Psoas muscle (tissue), 8 donors: ENCODE measurements at regions of chr15 and their contacts with region 1.

Region 1: GRCh38 chr15:55221090-55222011 is 24.6 kb upstream of the RSL24D1 start:
- DNase-seq: no peak
- ATAC-seq: peak in 2 of 4 donors; percentile 42 to 48
- H3K4me3 ChIP-seq: no peak overlapping the region
- H3K27ac ChIP-seq: no peak overlapping the region
- H3K4me1 ChIP-seq: no peaks in the 10 kb centered on the region
- H3K27me3 ChIP-seq: no peaks in the 10 kb centered on the region
- CTCF ChIP-seq: no peak

Region 2: DNA sequence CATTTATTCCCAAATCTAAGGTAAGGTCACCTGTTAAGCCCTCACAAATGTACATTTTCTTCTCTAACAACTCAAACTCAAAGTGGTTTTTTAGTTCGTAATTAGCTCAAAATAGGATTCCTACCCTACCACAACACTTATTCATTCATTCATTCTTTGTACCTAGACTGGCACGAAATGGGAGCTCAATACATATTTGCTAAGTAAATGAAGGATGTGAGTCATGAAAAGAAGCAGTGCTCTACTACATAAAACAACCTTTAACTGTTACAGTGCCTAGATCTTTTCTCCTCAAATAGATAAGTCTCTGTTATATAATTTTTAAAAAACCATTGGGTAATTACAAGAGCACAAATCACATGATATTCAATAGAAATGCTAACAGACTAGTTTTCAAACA is 37.7 kb before region 1 on chr15:
- intact Hi-C with region 1: no loop called
- DNase-seq: no peak
- ATAC-seq: no peak
- H3K4me3 ChIP-seq: no peak overlapping the region
- H3K27ac ChIP-seq: no peak overlapping the region
- H3K4me1 ChIP-seq: no peaks in the 10 kb centered on the region
- H3K27me3 ChIP-seq: no peaks in the 10 kb centered on the region
- CTCF ChIP-seq: no peak

Region 3: GRCh38 chr15:55270291-55270690 is 48.9 kb after region 1 on chr15:
- intact Hi-C with region 1: loop called in 1 of 2 experiments (anchors 5 kb)
- DNase-seq: no peak
- ATAC-seq: no peak
- H3K4me3 ChIP-seq: no peak overlapping the region
- H3K27ac ChIP-seq: no peak overlapping the region
- H3K4me1 ChIP-seq: no peaks in the 10 kb centered on the region
- H3K27me3 ChIP-seq: no peaks in the 10 kb centered on the region
- CTCF ChIP-seq: no peak

Region 4: GRCh38 chr15:55279746-55280351 is 58.5 kb after region 1 on chr15:
- intact Hi-C with region 1: loop called in 1 of 2 experiments (anchors 5 kb)
- DNase-seq: no peak
- ATAC-seq: no peak
- H3K4me3 ChIP-seq: no peak overlapping the region
- H3K27ac ChIP-seq: no peak overlapping the region
- H3K4me1 ChIP-seq: no peaks in the 10 kb centered on the region
- H3K27me3 ChIP-seq: no peaks in the 10 kb centered on the region
- CTCF ChIP-seq: no peak

Region 5: GRCh38 chr15:55290528-55291057 is 69.2 kb after region 1 on chr15:
- intact Hi-C with region 1: loop called (anchors 1 to 5 kb)
- DNase-seq: peak; percentile 82 to 90
- ATAC-seq: peak; percentile 88 to 98 (median 91)
- H3K4me3 ChIP-seq: peak overlapping the region; percentile 68
- H3K27ac ChIP-seq: peak overlapping the region; percentile 54
- H3K4me1 ChIP-seq: no peaks in the 10 kb centered on the region
- H3K27me3 ChIP-seq: peaks cover 0 to 6% (median 0%) of the 10 kb centered on the region in 3 donors
- CTCF ChIP-seq: peak; percentile 90